ENCODE measurements at regions of chr2 and their contacts with region 1.

Region 1: DNA sequence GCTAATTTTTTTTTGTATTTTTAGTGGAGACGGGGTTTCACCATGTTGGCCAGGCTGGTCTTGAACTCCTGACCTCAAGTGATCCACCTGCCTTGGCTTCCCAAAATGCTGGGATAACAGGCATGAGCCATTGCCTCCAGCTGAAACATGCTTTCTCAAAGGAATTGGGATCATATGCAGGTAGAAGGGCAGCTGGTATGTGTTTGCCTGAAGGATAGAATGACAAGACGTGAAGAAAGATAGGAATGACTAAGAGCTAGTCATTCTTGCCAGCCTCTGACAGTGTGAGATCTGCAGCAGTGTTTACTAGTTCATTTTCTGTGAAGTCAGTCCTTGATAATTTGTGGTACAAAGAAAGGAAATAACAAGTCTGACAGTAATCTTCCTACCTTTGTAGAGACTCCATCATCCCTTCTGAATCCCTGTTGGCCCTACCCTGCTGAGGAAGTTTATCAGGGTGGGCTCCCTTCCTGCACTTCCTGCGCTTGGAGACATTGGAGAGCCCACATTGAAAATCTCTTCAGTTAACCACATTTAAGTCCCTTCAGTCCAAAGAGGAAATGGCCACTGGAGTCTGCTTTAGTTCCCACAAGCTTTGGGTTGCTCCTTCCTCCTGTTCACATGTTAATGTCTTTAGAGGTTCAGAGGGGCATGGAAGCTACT is 14.7 kb downstream of the CFLAR start:
- DNase-seq: peak; percentile 62
- ATAC-seq: peak; percentile 48
- H3K4me3 Mint-ChIP-seq: peak overlapping the region; percentile 81
- H3K27ac Mint-ChIP-seq: peak overlapping the region; percentile 95
- H3K4me1 Mint-ChIP-seq: peaks cover 65% of the 10 kb centered on the region
- H3K27me3 Mint-ChIP-seq: no peaks in the 10 kb centered on the region

Region 2: DNA sequence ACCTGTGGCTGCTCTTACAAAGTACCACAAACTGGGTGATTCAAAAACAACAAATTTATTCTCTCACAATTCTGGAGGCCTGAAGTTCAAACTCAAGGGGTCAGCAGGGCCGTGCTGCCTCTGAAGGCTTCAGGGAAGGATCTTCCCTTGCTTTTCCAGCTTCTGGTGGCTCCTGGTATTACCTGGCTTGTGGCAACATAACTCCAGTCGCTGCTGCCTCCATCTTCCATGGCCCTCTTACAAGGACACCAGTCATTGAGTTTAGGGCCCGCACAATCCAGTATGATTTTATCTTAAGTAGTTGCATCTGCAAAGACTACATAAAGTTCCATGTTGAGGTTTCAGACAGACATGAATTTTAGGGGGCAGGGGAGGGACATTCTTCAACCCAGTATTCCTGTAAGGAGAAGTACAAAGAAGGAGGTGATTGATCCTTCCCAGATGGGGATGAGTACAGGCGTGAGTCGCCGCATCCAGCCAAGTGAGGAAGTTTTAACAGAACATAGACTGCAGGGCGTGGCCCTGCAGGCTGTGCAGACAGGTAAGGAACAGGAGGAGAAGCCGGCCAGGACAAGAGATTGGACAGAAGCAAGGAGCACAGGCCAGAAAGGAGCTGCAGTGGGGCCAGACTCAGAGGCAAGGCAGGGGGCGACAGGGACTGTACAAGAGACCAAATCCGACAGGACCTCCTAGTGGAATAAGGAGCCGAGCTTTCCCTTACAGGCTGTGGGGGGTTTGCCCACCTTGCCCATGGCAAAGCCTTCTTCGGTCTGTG is 363.4 kb before region 1 on chr2:
- CTCF ChIA-PET with region 1: no interaction called
- POLR2A ChIA-PET with region 1: no interaction called
- intact Hi-C with region 1: no loop called
- DNase-seq: no peak
- ATAC-seq: no peak
- H3K4me3 Mint-ChIP-seq: no peak overlapping the region
- H3K27ac Mint-ChIP-seq: peak overlapping the region; percentile 11
- H3K4me1 Mint-ChIP-seq: peaks cover 30% of the 10 kb centered on the region
- H3K27me3 Mint-ChIP-seq: no peaks in the 10 kb centered on the region

Region 3: GRCh38 chr2:201040867-201041628 is 89.6 kb before region 1 on chr2:
- CTCF ChIA-PET with region 1: no interaction called
- POLR2A ChIA-PET with region 1: no interaction called
- intact Hi-C with region 1: no loop called
- DNase-seq: no peak
- ATAC-seq: no peak
- H3K4me3 Mint-ChIP-seq: no peak overlapping the region
- H3K27ac Mint-ChIP-seq: no peak overlapping the region
- H3K4me1 Mint-ChIP-seq: peaks cover 4% of the 10 kb centered on the region
- H3K27me3 Mint-ChIP-seq: no peaks in the 10 kb centered on the region

Region 4: DNA sequence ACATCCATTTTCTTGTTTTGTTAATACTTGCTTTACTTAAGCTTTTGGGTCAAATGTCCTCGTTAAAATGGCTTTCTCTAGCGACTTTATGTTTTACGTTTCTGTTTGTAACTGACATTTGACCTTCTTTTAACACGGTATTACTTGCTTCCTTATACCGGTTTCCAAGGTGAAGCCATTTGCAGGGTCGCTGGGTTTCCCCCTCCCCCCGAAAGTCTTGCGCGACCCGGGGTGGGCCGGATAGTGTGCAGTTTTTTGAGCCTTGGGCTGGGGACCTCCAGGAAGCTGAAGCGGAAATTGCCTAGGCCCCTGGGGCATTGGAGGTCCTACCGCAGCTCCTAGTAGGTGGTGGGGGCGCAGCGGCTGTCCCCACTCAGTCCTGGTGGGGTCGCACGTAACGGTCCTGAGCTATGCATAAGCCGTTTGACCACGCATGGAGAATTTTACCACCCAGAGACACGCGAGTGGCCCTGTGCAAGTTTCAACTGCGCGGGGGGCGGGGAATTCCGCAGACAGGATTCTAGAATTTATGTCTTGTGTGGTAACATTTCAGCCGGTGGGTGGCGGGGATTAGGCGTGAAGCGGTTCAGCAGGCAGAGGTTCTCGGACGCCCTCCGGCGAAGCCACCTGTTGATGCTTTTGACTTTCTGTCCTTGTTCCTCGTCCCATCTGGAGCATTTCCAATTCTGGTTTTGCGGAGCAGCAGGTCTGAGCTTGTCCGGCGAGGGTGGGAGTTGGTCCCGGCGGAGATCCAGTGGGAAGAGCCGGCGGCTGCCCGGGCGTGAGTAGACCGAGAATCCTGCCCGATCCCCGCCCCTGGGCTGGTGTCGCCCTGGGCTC is 12.3 kb before region 1 on chr2:
- CTCF ChIA-PET with region 1: interaction called, 11 read pairs
- POLR2A ChIA-PET with region 1: interaction called, 14 read pairs
- intact Hi-C with region 1: loop called (anchors 1 kb)
- DNase-seq: peak; percentile 94
- ATAC-seq: peak; percentile 37
- H3K4me3 Mint-ChIP-seq: peak overlapping the region; percentile 98
- H3K27ac Mint-ChIP-seq: peak overlapping the region; percentile 100
- H3K4me1 Mint-ChIP-seq: peaks cover 42% of the 10 kb centered on the region
- H3K27me3 Mint-ChIP-seq: no peaks in the 10 kb centered on the region

Region 5: GRCh38 chr2:201151127-201151981 is 20.7 kb after region 1 on chr2:
- CTCF ChIA-PET with region 1: interaction called, 3 read pairs
- POLR2A ChIA-PET with region 1: interaction called, 3 read pairs
- intact Hi-C with region 1: loop called (anchors 2 kb)
- DNase-seq: no peak
- ATAC-seq: peak; percentile 56
- H3K4me3 Mint-ChIP-seq: no peak overlapping the region
- H3K27ac Mint-ChIP-seq: peak overlapping the region; percentile 88
- H3K4me1 Mint-ChIP-seq: peaks cover 36% of the 10 kb centered on the region
- H3K27me3 Mint-ChIP-seq: no peaks in the 10 kb centered on the region

Region 6: DNA sequence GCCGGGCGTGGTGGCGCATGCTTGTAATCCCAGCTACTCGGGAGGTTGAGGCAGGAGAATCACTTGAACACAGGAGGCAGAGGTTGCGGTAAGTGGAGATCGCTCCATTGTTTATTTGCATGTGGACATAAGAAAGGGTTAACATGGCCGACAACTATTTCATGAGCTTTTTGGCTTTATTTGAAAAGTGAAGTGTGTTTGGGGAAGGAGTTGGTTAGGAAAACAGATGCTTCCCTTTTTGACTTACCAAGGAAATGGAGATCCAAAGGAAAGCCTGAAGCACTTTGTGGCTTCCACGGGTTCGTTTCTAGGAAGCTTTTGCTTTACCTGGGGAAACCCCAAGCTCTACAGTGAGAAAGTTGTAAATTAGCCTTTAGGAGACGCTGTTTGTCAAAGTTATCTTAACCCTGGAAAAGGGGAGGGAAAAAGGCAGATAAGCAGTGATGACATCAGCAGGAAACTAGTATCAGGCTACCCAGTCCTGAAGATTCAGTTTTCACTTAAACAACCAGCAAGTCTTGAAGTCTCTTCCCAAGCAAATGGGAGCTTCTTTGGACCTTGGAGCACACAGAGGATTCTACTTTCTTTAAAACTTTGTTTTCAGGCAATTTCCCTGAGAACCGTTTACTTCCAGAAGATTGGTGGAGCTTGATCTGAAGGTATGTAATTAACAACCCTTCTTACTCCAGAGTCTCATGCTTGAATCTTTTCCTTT is 52.2 kb after region 1 on chr2 and contains the start of gene CASP10:
- CTCF ChIA-PET with region 1: interaction called, 4 read pairs
- POLR2A ChIA-PET with region 1: interaction called, 3 read pairs
- intact Hi-C with region 1: loop called (anchors 2 kb)
- DNase-seq: no peak
- ATAC-seq: peak; percentile 66
- H3K4me3 Mint-ChIP-seq: peak within 1 kb of the TSS; percentile 86
- H3K27ac Mint-ChIP-seq: peak within 1 kb of the TSS; percentile 96
- H3K4me1 Mint-ChIP-seq: peaks cover 43% of the 10 kb centered on the region
- H3K27me3 Mint-ChIP-seq: no peaks in the 10 kb centered on the region
- total RNA-seq, gene CASP10: 12.2 to 16.8 TPM

Measured in activated CD4-positive, alpha-beta T cell treated with anti-CD3 and anti-CD28 coated beads for 36 hours (primary cell).